Calu3 (cell line): ENCODE measurements at regions of chrX and their contacts with region 1.

Region 1: DNA sequence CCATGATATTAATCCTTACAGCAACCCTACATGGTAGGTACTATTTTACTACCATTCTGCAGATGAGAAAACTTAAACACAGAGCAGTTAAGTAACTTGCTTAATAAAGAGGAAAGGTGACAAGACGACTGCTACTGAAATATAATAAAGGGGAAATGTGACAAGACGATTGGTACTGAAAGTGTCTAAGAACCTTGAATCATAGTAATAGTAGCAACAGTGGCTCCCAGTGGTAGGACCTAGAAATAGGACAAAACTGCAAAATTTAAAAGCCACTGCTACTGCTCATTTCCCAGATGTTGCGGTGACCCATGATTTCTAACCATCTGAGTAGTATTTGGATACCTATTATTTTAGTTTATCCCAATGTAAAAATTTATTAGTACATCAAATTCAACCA is 89.5 kb downstream of the TASL start:
- DNase-seq: peak; percentile 6
- H3K4me3 Mint-ChIP-seq: no peak overlapping the region
- H3K27ac Mint-ChIP-seq: no peak overlapping the region
- H3K4me1 Mint-ChIP-seq: no peaks in the 10 kb centered on the region
- H3K27me3 Mint-ChIP-seq: no peaks in the 10 kb centered on the region
- CTCF ChIP-seq: no peak

Region 2: GRCh38 chrX:30275498-30275897 is 212.6 kb before region 1 on chrX:
- CTCF ChIA-PET with region 1: no interaction called
- intact Hi-C with region 1: loop called (anchors 1 kb)
- DNase-seq: no peak
- H3K4me3 Mint-ChIP-seq: no peak overlapping the region
- H3K27ac Mint-ChIP-seq: no peak overlapping the region
- H3K4me1 Mint-ChIP-seq: peaks cover 11% of the 10 kb centered on the region
- H3K27me3 Mint-ChIP-seq: no peaks in the 10 kb centered on the region
- CTCF ChIP-seq: no peak

Region 3: DNA sequence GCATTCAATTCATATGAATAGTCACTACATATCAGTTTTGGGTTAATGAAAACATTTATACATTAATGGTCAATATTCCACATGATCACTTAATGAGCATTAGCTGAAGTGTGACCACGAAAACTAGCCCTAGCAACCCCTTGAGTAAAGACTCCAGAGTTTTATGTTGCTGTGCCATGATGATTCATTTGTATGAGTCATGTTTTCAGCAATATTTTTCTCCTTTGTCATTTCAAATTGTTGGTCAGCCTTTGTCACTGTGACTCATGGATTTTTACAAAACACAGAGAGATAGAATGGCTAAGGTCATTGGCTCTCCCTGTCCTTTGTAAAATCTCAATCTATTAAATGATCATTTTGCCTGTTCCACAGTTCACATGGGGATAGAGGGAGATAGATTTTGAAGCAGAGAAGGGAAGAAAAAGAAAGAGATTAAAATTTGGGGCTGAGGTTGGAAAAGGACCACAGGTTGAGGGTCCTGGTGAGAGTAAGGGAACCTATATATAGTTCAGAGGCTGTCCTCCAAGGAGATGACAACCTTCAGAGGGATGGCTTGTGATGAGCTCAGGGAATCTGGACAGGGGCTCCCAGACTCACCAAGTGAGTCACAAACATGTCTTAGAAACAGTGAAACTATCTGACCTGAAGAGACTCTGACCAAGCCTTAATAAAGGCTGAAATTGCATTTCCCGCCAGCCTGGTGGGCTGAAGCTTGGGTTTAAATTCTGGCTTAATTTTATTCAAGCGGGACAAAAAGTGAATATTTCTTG is 204.5 kb before region 1 on chrX:
- CTCF ChIA-PET with region 1: no interaction called
- intact Hi-C with region 1: loop called (anchors 2 kb)
- DNase-seq: peak; percentile 28
- H3K4me3 Mint-ChIP-seq: peak overlapping the region; percentile 49
- H3K27ac Mint-ChIP-seq: peak overlapping the region; percentile 98
- H3K4me1 Mint-ChIP-seq: peaks cover 31% of the 10 kb centered on the region
- H3K27me3 Mint-ChIP-seq: no peaks in the 10 kb centered on the region
- CTCF ChIP-seq: no peak

Region 4: DNA sequence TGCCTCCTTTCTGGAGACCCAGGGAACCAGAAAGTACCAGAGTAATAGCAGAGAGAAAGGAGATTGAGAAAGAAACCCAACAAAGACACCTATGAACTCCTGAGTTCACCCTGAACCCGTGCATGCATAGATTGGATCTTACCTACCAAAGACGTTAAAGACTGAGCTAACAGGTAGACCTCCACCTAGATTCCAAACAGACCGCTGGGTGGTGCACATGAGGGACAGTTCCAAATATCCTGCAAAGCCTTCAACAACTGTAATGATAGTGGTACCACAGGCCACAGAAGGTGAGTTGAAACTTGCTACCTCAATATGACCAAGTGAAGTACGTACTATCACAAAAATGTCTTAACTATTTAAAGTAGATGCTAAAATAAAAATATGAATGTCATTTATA is 144.9 kb before region 1 on chrX:
- CTCF ChIA-PET with region 1: interaction called, 3 read pairs
- intact Hi-C with region 1: loop called (anchors 2 kb)
- DNase-seq: peak; percentile 31
- H3K4me3 Mint-ChIP-seq: no peak overlapping the region
- H3K27ac Mint-ChIP-seq: no peak overlapping the region
- H3K4me1 Mint-ChIP-seq: no peaks in the 10 kb centered on the region
- H3K27me3 Mint-ChIP-seq: no peaks in the 10 kb centered on the region
- CTCF ChIP-seq: no peak